Right cardiac atrium (tissue), 5 donors: ENCODE measurements at regions of chr22 and their contacts with region 1.

Region 1: DNA sequence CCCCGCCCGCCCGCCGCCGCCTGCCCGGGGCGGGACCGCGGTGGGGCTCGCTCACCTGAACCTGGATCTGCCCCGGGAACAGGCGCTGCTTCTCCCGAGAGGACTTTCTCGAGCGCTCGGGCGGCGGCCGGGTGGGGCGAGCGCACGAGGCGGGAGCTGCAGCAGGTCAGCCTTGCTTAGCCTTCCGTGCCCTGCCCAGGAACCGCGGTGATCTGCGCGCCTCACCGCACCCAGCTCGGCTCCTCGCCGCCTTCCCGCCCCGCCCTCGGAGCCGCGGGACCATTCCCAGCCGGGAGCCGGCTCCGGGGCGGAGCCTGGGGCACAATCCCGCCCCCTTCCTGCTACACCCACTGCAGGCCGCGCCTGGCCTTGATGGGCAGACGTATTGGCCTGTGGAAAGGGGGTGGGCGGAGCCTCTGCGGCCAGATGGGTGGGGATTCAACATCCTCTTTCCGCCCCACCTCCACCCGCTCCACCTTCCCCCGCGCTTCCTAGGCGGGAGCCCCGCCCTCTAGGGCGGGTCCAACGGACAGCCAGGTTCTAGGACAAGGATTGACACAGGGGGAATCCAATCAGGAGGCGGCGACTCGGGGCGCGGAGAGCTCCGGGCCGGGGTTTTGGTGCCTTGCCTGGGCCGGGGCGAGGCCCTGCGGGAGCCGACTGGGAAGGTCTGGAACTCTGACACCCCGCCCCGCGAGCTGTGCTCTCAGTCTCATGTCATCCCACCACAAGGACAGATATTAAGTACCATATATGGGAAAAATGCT is at the start of gene MYH9:
- DNase-seq: peak; percentile 100
- ATAC-seq: peak; percentile 97
- H3K4me3 ChIP-seq: peak within 1 kb of the TSS; percentile 89
- H3K27ac ChIP-seq: peak within 1 kb of the TSS; percentile 91
- H3K4me1 ChIP-seq: peaks cover 7% of the 10 kb centered on the region
- H3K27me3 ChIP-seq: no peaks in the 10 kb centered on the region
- total RNA-seq, gene MYH9: 140 to 224 (median 163) TPM

Region 2: GRCh38 chr22:36323182-36323854 is 64.6 kb before region 1 on chr22:
- intact Hi-C with region 1: loop called in 1 of 4 experiments (anchors 5 kb)
- DNase-seq: peak; percentile 83 to 88 (median 88)
- ATAC-seq: peak; percentile 59 to 69
- H3K4me3 ChIP-seq: no peak overlapping the region
- H3K27ac ChIP-seq: peak overlapping the region; percentile 99
- H3K4me1 ChIP-seq: peaks cover 38% of the 10 kb centered on the region
- H3K27me3 ChIP-seq: no peaks in the 10 kb centered on the region

Region 3: GRCh38 chr22:36331306-36331911 is 56.5 kb before region 1 on chr22:
- intact Hi-C with region 1: loop called in 3 of 4 experiments (anchors 5 to 10 kb)
- DNase-seq: peak; percentile 88 to 91 (median 89)
- ATAC-seq: peak; percentile 50 to 76
- H3K4me3 ChIP-seq: no peak overlapping the region
- H3K27ac ChIP-seq: peak overlapping the region; percentile 99
- H3K4me1 ChIP-seq: peaks cover 77% of the 10 kb centered on the region
- H3K27me3 ChIP-seq: no peaks in the 10 kb centered on the region

Region 4: GRCh38 chr22:36409911-36410756 is 22.2 kb after region 1 on chr22:
- intact Hi-C with region 1: no loop called
- DNase-seq: peak; percentile 73 to 90 (median 86)
- ATAC-seq: peak; percentile 88
- H3K4me3 ChIP-seq: peak overlapping the region; percentile 6
- H3K27ac ChIP-seq: peak overlapping the region; percentile 19
- H3K4me1 ChIP-seq: peaks cover 1% of the 10 kb centered on the region
- H3K27me3 ChIP-seq: no peaks in the 10 kb centered on the region

Region 5: DNA sequence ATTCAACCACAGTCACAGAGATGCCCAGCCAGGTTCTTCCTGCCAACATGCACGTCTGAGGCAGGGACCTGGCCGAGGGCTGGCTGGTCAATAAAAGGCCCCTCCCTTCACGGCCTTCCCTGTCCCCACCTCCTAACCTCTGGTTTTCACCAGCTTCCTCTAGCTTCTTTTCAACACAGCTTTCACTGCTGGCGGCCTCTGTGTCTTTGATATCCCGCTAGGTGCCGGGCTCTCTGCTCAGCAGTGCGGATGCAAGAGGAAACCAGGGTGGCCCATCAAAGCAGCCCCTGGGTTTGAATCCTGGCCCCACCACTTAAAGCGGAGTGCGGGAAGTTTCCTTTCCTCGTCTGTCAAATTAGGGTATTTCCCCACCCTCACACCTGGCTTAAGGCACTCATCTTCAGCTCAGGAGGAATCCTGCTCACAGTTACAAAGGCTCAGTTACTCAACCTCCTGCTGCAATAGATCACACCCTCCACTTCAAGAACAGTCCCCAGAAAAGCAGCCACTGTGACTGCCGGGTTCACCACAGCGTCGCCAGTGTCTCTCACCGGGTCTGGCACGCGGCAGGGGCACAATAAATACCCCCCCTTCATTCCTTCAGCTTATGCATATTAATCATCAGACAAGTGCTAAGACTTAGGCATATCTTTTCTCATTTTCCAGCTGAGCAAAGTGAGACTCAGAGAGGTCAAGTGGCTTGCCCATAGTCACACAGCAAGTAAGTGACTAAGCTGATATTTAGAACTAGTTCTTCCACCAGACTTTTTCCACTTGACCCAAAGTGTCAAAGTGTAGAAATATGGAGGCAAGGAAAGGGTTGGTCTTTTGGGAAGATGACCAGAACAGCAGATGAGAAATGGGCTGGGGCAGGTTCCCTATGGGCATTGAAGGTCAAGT is 47.8 kb after region 1 on chr22:
- intact Hi-C with region 1: no loop called
- DNase-seq: peak in 1 of 3 donors; percentile 31
- ATAC-seq: peak; percentile 8 to 26
- H3K4me3 ChIP-seq: no peak overlapping the region
- H3K27ac ChIP-seq: no peak overlapping the region
- H3K4me1 ChIP-seq: no peaks in the 10 kb centered on the region
- H3K27me3 ChIP-seq: no peaks in the 10 kb centered on the region

Region 6: DNA sequence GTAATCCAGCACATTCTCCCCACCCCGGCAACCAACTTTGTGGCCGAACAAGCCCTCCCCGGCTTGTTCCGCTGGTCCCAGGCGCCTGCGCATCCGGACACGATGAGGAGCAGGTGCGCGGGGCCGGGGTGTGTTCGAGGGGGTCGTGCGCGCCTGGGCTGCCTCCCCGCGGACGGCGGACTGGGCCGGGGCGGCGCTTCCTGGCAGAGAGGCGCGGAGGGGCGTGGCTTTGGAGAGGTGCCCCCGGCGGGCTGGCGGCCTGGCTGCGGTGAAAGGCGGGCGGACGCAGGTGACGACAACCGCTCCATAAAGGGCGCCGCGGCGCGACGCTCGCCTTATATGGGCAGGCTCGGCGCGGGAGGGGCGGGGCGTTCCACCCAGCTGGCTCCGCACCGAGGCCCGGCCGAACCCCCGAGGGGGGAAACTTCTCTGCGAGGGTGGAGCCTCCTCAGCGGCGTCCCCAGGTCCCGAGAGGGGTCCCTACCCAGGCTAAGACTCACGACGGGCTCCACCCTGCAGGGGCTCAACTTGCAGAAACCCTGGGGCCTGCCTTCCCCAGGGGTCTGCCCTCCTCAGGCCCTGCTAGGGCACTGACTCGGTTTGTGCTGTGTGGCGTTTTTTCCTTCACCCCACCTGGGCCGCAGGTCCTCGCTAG is 67.1 kb after region 1 on chr22:
- intact Hi-C with region 1: loop called in 2 of 4 experiments (anchors 5 to 10 kb)
- DNase-seq: peak; percentile 92 to 97 (median 96)
- ATAC-seq: peak; percentile 87 to 89
- H3K4me3 ChIP-seq: peak overlapping the region; percentile 37
- H3K27ac ChIP-seq: peak overlapping the region; percentile 93
- H3K4me1 ChIP-seq: peaks cover 15% of the 10 kb centered on the region
- H3K27me3 ChIP-seq: no peaks in the 10 kb centered on the region

Region 7: DNA sequence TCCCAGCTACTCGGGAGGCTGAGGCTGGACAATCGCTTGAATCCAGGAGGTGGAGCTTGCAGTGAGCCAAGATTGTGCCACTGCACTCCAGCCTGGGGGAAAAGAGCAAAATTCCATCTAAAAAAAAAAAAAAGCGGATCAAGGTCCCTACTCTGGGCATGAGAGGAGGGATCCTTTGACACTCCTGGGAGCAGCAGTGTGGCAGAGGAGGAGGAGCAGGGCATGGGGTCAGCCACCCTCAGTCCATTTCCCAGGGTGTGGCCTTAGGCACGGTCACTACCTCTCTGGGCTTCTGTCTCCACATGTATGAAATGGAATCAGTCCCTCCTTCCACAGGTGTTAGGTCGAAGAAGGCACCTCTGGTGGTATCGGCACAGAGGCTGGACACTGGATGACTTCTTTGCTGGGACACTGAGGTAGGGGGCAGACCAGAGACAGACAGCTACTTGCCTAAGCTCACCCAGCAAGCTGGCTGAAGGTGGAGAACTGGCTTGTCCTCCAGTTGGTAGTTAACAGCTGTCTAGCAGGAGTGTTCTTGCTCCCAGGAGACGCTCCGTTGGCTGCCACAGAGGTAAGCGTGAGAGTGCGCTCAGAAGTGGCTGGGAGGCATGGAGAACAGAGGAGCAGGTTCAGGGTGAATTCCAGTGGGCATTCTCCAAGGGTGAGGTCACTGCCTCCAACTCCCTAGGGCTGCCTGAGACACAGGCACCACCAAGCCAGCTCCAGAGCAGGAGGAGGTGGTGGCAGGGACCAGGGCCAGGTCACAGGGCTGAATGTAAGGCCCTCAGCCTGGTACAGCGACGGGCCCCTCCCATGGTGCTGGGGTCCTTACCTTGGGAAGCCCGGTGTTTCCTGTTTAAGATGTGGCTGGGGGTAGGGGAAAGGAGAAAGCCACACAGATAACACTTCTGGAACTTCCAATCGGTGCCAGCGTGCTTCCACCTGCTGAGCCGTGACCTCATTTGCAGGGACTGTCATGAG is 74.0 kb after region 1 on chr22:
- intact Hi-C with region 1: loop called in 3 of 4 experiments (anchors 5 to 10 kb)
- DNase-seq: peak in 2 of 3 donors; percentile 48 to 50
- ATAC-seq: peak in 1 of 2 donors; percentile 2
- H3K4me3 ChIP-seq: no peak overlapping the region
- H3K27ac ChIP-seq: peak overlapping the region; percentile 61
- H3K4me1 ChIP-seq: peaks cover 7% of the 10 kb centered on the region
- H3K27me3 ChIP-seq: no peaks in the 10 kb centered on the region

Region 8: GRCh38 chr22:36470162-36470993 is 82.4 kb after region 1 on chr22:
- intact Hi-C with region 1: loop called (anchors 5 to 10 kb)
- DNase-seq: peak; percentile 79 to 89 (median 88)
- ATAC-seq: peak; percentile 70 to 76
- H3K4me3 ChIP-seq: no peak overlapping the region
- H3K27ac ChIP-seq: peak overlapping the region; percentile 4
- H3K4me1 ChIP-seq: peaks cover 2% of the 10 kb centered on the region
- H3K27me3 ChIP-seq: no peaks in the 10 kb centered on the region

Region 9: DNA sequence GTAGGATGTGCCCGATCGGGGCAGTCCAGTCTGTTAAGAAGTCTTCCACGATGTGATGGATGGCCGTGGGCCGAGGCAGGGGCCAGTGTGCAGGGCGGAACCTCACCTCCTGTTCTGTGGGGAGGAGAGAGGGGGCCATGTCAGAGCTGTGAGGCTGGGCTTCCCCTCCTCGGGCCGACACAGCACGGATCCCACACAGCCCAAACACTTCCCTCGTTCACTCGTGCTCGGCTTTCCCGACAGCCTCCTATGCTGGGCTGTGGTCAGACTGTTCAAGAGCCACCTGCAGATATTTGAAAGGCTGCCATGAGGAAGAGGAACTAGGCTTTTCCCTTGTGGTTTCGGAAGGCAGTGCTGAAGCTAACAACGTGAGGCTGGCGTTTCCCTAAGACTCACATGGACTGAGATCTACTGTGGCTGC is 105.8 kb after region 1 on chr22:
- intact Hi-C with region 1: no loop called
- DNase-seq: peak in 2 of 3 donors; percentile 67
- ATAC-seq: peak; percentile 48 to 51
- H3K4me3 ChIP-seq: no peak overlapping the region
- H3K27ac ChIP-seq: no peak overlapping the region
- H3K4me1 ChIP-seq: no peaks in the 10 kb centered on the region
- H3K27me3 ChIP-seq: no peaks in the 10 kb centered on the region